Naive thymus-derived CD4-positive, alpha-beta T cell (primary cell): ENCODE measurements at regions of chr4 and their contacts with region 1.

Region 1: DNA sequence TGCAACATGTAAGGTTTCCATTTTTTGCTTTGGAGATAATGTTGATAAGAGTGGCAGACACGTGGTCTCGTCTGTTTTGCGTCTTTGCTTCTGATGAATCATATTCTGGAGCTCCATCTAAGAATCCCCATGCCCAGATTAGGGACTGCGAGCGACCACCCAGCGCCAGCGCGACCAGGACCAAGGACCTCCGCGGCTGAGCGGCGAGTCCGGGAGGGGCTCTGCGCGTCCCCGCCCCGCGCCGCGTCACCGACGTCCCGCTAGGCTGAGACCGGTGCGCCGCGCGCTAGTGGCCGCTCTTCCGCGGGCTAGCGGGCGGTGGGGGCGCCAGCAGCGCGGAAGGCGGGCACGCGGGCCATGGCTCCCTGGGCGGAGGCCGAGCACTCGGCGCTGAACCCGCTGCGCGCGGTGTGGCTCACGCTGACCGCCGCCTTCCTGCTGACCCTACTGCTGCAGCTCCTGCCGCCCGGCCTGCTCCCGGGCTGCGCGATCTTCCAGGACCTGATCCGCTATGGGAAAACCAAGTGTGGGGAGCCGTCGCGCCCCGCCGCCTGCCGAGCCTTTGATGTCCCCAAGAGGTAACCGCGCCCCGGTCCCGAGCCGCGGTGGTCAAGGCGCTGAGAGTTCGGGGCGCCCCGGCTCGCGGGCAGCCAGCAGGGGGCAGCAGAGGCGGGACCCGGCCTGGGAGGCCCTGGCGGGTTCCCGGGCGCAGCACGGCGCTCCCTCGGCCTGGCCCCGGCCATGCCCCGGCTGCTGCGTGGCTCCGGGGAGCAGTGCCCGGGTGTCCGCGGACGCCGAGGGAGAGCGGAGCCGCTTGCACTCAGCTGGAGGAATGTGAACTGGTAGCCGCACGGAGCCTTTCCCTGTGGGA is at the start of gene SRD5A3:
- DNase-seq: peak; percentile 53 to 92 (median 72)
- ATAC-seq: peak; percentile 97
- H3K4me3 ChIP-seq: peak within 1 kb of the TSS; percentile 79
- H3K4me3 Mint-ChIP-seq: peak within 1 kb of the TSS; percentile 83 to 94 (median 90)
- H3K27ac ChIP-seq: peak within 1 kb of the TSS; percentile 69
- H3K27ac Mint-ChIP-seq: peak within 1 kb of the TSS; percentile 70 to 91 (median 87)
- H3K4me1 ChIP-seq: peaks cover 6 to 8% of the 10 kb centered on the region in 2 donors
- H3K4me1 Mint-ChIP-seq: peaks cover 8 to 23% (median 19%) of the 10 kb centered on the region in 7 donors
- H3K27me3 ChIP-seq: no peaks in the 10 kb centered on the region
- H3K27me3 Mint-ChIP-seq: no peaks in the 10 kb centered on the region
- total RNA-seq, gene SRD5A3: 1.9 to 8.5 (median 4.5) TPM

Region 2: DNA sequence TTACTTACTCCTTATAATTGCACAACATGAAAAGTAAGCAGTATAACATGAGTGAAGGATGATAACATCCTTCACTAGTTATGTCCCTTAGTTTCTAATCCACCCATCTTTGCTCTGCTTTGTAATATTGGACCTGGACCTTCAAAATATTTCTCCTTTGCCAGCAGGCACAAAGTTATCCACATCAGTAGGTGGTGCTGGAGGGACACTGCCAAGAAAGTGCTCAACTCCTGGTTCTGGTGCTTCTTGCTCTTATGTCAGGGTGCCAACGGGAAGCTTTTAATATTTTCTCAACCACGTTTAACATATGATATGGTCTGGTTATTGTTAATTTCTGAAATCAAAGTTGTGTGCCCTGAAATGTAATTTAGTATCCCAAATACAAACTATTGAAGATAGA is 98.6 kb after region 1 on chr4:
- CTCF ChIA-PET with region 1: interaction called, 3 read pairs
- POLR2A ChIA-PET with region 1: no interaction called
- intact Hi-C with region 1: loop called in 1 of 2 experiments (anchors 5 kb)
- DNase-seq: peak in 1 of 9 donors; percentile 7
- ATAC-seq: no peak
- H3K4me3 ChIP-seq: no peak overlapping the region
- H3K4me3 Mint-ChIP-seq: no peak overlapping the region
- H3K27ac ChIP-seq: no peak overlapping the region
- H3K27ac Mint-ChIP-seq: peak overlapping the region in 1 of 9 donors; percentile 51
- H3K4me1 ChIP-seq: no peaks in the 10 kb centered on the region
- H3K4me1 Mint-ChIP-seq: peaks cover 0 to 15% (median 11%) of the 10 kb centered on the region in 7 donors
- H3K27me3 ChIP-seq: no peaks in the 10 kb centered on the region
- H3K27me3 Mint-ChIP-seq: no peaks in the 10 kb centered on the region

Region 3: DNA sequence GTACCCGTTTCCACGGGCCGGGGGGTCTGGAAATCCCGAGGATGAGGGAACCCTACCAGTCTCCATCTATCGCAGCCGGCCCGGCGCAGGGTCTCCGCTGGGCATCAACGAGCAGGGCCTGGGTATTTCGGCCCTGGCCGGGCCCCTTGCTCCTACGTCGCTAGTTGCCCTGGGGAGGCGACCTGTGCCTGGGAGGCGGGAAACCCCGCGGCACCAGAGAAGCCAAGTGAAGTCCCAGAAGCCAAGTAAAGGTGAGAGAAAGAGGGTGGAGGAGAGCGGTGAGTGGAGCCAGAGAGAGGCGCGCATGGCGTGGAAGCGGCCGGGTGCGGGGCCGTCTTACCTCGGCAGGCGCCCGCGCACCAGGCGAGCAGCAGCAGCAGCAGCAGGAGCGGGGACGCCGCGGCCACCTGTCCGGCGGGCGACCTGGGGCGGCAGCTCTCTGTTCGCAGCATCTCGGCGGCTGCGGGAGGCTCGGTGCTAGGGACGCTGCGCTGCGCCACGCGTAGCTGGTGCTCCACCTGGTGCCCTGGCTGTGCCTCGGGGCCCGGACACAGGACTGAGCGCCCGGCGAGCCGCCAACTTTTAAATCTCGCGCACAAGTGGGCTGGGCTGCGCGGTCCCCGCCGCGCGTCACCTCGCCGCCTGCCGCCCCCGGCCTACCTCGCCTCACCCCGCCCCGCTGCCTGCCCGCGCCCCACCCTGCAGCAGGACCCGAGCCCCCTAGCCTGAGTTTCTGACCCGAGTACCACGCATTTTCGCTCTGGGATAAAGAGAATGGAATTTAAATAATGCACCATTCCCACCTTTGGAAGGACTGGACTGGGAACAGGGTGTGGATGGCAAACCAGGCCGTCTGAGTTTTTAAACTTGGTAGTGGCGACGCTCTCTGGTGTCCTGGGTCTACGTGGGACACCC is 289.8 kb after region 1 on chr4 and contains the start of gene NMU:
- CTCF ChIA-PET with region 1: no interaction called
- POLR2A ChIA-PET with region 1: no interaction called
- intact Hi-C with region 1: loop called in 1 of 2 experiments (anchors 1 kb)
- DNase-seq: peak in 2 of 9 donors; percentile 3 to 28
- ATAC-seq: peak; percentile 29
- H3K4me3 ChIP-seq: no peak within 1 kb of the TSS
- H3K4me3 Mint-ChIP-seq: peak within 1 kb of the TSS; percentile 37 to 86 (median 72)
- H3K27ac ChIP-seq: no peak within 1 kb of the TSS
- H3K27ac Mint-ChIP-seq: peak within 1 kb of the TSS in 1 of 9 donors; percentile 43
- H3K4me1 ChIP-seq: no peaks in the 10 kb centered on the region
- H3K4me1 Mint-ChIP-seq: peaks cover 12 to 22% (median 19%) of the 10 kb centered on the region in 7 donors
- H3K27me3 ChIP-seq: peaks cover 0 to 5% of the 10 kb centered on the region in 2 donors
- H3K27me3 Mint-ChIP-seq: peaks cover 68 to 77% (median 75%) of the 10 kb centered on the region in 5 donors
- total RNA-seq, gene NMU: not detected

Region 4: DNA sequence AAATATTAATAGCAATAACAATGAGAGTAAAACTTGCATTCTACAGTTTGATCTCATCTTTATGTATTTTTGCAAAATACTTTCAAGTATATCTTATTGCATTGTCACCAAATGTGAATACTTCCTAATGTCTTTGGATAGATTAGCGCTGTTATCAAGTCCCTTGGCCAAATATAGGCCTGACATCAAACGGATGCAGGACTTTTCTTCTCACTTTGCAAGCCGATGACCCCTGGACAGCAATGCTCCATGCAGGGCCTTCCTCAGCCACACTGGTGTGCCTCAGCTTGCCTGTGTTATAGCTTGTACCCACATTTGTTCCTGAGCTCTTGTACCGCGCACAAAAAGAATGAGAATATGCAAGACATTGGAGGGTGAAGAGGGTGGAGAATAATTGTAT is 307.9 kb after region 1 on chr4:
- CTCF ChIA-PET with region 1: no interaction called
- POLR2A ChIA-PET with region 1: no interaction called
- intact Hi-C with region 1: no loop called
- DNase-seq: no peak
- ATAC-seq: no peak
- H3K4me3 ChIP-seq: no peak overlapping the region
- H3K4me3 Mint-ChIP-seq: no peak overlapping the region
- H3K27ac ChIP-seq: no peak overlapping the region
- H3K27ac Mint-ChIP-seq: no peak overlapping the region
- H3K4me1 ChIP-seq: no peaks in the 10 kb centered on the region
- H3K4me1 Mint-ChIP-seq: no peaks in the 10 kb centered on the region
- H3K27me3 ChIP-seq: no peaks in the 10 kb centered on the region
- H3K27me3 Mint-ChIP-seq: peaks cover 2 to 25% (median 18%) of the 10 kb centered on the region in 5 donors